ENCODE measurements at regions of chr9 and their contacts with region 1.

Region 1: DNA sequence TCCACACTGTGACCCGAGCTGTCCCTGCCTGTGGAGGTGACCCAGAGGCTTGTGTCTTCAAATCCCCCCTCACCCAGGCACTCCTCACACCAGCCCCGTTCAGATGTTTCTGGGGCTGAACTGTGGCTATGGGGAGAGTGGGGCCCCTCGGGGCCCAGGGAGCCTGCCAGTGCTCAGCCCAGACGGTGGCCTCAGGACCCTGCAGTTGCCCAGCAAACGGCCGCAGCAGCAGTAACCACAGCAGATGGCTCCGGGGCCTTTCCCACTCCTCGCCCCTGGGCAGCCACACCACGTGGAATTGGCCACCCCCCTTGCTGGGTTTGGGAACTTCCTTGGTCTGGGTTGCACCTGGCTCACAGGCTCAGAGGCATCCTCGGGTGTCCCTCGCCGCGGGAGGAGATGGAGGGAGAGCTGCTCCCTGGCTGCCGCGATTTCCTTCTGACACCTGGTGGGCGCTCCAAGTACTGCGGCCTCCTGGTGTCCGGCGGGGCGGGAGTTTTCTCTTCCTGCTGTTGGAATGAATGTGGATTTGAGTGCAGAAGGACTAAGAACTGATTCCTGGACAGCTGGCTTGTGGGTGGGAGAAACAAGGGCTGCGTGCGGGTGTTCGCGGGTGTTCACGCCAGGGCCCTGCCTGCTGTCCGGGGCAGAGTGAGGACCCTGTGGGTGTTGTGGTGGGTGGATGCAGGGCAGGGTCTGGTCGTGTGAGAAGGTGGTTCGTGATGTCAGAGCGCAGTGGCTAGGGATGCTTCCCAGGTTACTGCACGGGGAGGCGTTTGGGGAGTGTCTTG is 97.5 kb downstream of the COL5A1 start:
- DNase-seq: peak; percentile 77 to 91 (median 89)
- ATAC-seq: peak; percentile 47 to 66
- H3K4me3 ChIP-seq: no peak overlapping the region
- H3K27ac ChIP-seq: no peak overlapping the region
- H3K4me1 ChIP-seq: no peaks in the 10 kb centered on the region
- H3K27me3 ChIP-seq: no peaks in the 10 kb centered on the region

Region 2: DNA sequence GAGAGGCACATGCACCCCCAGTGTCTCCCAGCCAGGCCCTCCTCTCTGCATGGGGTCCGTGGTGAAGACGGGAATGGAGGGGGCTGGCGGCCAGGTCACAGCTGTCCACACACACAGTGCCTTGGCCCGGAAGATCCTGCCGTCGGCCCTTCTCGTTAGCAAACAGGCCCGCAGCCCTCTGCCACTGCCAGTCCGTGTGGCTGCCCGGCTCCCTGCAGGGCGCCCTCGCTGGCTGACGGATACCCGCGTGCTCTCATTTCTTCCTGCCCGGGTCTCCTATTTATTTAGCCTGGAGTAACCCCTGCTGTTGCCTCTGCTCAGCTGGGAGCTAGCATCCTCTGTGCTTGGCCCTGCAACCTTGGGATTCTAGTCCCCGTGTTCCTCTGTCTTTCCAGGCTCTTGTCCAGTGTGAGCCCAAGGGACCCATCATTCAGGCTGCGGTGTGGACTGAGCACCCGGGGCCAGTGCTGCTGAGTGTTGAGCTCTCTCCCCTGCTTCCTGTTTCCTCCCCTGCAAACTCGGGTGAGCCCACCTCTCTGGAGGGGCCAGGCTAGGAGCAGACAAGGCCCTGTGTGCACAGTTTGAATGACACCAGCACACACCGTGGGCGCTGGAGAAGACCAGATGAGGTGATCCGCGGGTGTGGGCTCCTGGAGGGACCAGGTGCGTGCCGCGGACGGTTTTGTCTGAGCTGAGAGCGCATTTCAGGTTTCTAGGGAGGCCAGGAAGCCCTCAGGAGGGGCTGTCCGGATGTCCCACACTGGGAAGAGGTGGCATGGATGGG is 560.1 kb before region 1 on chr9:
- intact Hi-C with region 1: loop called in 1 of 4 experiments (anchors 10 kb)
- DNase-seq: peak in 2 of 3 donors; percentile 73 to 77
- ATAC-seq: peak; percentile 8 to 15
- H3K4me3 ChIP-seq: no peak overlapping the region
- H3K27ac ChIP-seq: no peak overlapping the region
- H3K4me1 ChIP-seq: no peaks in the 10 kb centered on the region
- H3K27me3 ChIP-seq: no peaks in the 10 kb centered on the region

Region 3: DNA sequence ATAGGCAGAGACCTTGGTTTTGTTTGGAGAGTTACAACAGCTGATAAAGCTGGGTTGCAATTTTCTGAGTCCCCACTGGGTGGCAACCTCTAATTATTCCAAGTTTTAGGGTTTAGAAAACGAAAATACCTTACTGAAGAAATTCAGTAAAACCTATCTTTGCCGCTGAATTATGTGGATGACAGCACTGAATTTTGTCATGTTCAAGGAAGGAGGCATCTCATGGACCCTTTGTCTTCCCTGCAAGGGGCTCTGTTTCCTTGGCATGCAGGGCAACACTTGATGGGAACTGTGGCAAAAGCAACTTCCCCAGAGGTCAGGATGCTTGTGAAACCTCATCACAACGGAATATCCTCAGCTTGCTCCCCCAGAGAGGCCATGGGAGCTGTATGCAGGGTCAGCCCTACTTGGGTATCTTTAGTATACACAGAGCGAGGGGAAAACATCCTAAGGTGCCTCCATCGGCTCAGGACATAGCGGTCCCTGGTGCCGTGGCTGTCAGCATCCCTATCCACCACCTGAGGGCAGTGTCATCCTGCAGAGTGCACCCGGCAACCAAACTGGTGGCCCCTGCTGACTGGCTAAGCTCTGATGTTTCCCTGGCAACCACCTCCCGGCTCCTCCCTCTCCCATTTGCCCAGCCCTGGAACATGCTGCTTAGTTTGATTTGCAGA is 289.7 kb before region 1 on chr9:
- intact Hi-C with region 1: loop called in 3 of 4 experiments (anchors 2 to 5 kb)
- DNase-seq: peak; percentile 93 to 97 (median 95)
- ATAC-seq: peak; percentile 95
- H3K4me3 ChIP-seq: no peak overlapping the region
- H3K27ac ChIP-seq: no peak overlapping the region
- H3K4me1 ChIP-seq: no peaks in the 10 kb centered on the region
- H3K27me3 ChIP-seq: no peaks in the 10 kb centered on the region

Region 4: DNA sequence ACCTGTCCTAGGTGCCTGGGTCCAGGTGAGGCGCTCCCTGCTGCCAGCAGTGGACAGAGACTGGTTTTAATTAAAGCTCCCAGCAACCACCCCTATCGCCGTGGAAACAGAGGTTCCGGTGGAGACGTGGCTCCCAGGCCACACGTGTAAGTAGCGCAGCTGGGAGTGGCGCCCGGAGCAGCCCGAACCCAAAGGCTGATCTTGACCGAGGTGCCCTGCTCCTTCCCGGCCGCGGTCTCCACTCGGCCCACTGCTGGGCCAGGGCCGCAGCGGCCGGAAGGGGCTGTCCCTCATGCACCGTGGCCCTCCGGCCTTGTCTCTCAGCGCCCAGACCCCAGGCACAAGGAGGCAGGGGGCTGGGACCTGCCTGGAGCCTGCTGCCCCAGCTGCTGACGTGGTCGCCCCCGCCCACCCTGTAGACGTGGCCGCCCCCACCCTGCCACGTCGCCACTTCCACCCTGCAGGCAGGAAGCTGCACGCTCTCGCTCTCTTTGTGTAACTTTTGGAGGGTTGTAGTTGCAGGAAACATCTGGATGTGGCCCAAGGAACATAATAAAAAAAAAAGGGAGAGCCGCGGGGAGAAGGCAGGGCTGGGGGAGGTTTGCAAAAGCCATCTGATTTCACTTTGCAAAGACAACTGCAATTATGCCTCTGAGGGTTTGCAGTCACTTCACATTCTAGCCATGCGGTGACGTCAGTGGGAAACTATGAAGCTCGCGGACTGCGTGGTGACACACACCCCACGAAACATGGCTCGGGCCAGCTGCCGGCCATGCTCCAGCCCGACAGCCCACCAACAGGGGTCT is 282.9 kb before region 1 on chr9:
- intact Hi-C with region 1: loop called in 2 of 4 experiments (anchors 2 to 5 kb)
- DNase-seq: peak; percentile 91 to 95 (median 95)
- ATAC-seq: peak; percentile 91
- H3K4me3 ChIP-seq: no peak overlapping the region
- H3K27ac ChIP-seq: peak overlapping the region; percentile 83
- H3K4me1 ChIP-seq: peaks cover 6% of the 10 kb centered on the region
- H3K27me3 ChIP-seq: no peaks in the 10 kb centered on the region

Region 5: GRCh38 chr9:134698587-134699342 is 40.3 kb before region 1 on chr9:
- intact Hi-C with region 1: loop called in 3 of 4 experiments (anchors 2 to 10 kb)
- DNase-seq: peak; percentile 72 to 88 (median 86)
- ATAC-seq: peak; percentile 68 to 71
- H3K4me3 ChIP-seq: no peak overlapping the region
- H3K27ac ChIP-seq: no peak overlapping the region
- H3K4me1 ChIP-seq: no peaks in the 10 kb centered on the region
- H3K27me3 ChIP-seq: no peaks in the 10 kb centered on the region

Measured in right cardiac atrium (tissue), 5 donors.